Right ventricle myocardium inferior (tissue), 1 donor: ENCODE measurements at regions of chr4 and their contacts with region 1.

Region 1: DNA sequence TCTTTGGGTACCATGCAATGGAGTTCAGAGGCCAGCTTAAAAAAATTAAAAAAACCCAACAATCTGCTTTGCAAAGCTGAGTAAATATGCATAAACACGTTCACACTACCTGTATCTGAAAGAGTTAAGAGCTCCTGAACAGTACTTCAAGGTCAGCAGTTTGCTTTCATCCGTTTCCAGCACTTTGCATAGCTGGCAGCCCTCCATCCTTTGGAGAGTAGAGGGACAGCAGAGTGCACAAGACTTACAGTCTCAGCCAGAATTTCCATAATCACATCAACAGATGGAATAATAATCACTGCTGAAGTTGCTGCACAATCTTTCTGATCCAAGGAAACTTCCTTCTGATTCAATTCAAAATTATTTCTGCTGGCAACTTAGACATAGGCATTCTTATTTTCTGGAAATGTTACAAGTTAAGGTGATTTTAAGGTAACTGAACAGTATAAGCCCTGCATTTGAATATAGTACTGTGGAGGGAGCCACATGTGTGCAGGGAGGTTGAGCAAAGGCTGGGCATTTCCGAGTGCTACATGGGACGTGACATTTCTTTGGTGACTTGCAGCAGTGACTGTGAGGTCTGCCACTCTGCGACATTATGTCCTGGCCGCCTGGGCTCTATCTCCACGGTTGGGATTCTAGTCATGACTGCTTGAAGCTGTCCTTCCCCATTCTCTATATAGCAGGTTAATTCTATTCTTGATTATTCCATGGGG is 73.5 kb upstream of the EMCN start:
- DNase-seq: no peak
- ATAC-seq: peak; percentile 65

Region 2: GRCh38 chr4:100641336-100641735 is 50.0 kb after region 1 on chr4:
- intact Hi-C with region 1: loop called (anchors 5 kb)
- DNase-seq: no peak
- ATAC-seq: no peak

Region 3: GRCh38 chr4:100736641-100737451 is 145.5 kb after region 1 on chr4:
- intact Hi-C with region 1: loop called (anchors 2 kb)
- DNase-seq: no peak
- ATAC-seq: no peak